ENCODE measurements at regions of chr14 and their contacts with region 1.

Region 1: DNA sequence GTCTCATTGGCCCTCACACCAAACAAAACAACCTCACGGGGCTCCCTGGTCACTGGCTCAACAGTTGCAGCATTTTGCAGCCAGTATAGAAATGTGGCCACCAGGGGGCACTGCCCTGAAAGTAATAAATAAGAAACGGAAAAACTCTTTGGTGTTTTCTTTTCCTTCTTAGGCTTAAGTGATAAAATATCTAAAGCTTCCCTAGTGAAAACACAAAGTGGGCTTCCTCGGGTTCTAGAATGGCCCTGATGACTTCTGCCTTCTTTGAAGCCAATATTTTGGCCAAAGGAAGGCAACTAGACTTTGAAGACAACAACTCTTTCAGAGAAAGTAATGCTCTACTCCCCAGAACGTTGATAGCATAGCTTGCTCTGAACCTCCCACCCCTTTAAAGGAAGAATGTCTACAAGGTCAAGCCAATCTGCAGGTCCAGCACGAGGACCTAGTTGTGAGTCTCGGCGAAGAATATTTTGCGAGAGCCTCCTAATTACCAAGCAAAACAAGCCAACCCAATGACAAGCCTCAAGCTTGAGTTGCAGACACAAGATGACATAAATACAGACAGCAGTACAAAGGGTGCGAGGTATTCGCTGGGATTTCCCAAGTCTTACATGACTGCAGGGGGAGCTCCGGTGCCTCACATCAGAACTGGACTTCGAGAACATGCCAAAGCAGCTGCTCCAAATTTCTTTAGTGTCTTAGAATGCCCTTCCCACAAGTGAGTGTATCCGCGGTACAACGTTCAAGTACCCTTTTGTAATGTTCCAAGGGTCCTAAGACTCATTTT is 2.6 kb downstream of the ITPK1 start:
- DNase-seq: peak; percentile 82
- H3K4me3 Mint-ChIP-seq: peak overlapping the region; percentile 86
- H3K27ac Mint-ChIP-seq: peak overlapping the region; percentile 67
- H3K4me1 Mint-ChIP-seq: peaks cover 9% of the 10 kb centered on the region
- H3K27me3 Mint-ChIP-seq: no peaks in the 10 kb centered on the region
- CTCF ChIP-seq: peak; percentile 73

Region 2: DNA sequence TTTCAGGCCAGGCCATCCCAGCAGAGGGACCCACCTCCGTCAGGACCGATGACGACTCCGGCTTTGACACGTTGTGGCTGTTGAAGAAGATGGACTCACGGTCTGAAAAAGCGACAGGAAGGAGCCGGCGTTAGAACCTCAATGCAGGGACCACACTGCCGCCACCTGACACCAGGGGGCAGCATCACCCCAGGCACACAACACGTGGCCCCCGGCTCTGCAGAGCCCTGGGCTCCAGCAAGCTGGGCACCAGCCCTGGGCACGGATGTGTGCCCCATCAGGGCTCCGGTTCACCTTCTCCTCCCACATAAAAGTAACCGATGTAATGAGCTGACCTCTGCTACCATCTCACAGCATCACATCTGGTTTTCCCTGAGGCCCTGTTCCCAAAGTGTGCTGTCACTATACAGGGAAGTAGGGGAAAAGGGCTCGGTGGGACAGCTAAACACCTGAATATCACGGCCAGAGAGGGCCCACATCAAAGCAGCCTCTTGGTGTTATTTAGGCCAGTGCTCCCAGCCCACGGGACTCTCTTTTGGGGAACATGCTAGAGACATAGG is 161.1 kb before region 1 on chr14:
- CTCF ChIA-PET with region 1: interaction called, 10 read pairs
- intact Hi-C with region 1: no loop called
- DNase-seq: peak; percentile 87
- H3K4me3 Mint-ChIP-seq: no peak overlapping the region
- H3K27ac Mint-ChIP-seq: no peak overlapping the region
- H3K4me1 Mint-ChIP-seq: peaks cover 8% of the 10 kb centered on the region
- H3K27me3 Mint-ChIP-seq: no peaks in the 10 kb centered on the region
- CTCF ChIP-seq: peak; percentile 89

Region 3: DNA sequence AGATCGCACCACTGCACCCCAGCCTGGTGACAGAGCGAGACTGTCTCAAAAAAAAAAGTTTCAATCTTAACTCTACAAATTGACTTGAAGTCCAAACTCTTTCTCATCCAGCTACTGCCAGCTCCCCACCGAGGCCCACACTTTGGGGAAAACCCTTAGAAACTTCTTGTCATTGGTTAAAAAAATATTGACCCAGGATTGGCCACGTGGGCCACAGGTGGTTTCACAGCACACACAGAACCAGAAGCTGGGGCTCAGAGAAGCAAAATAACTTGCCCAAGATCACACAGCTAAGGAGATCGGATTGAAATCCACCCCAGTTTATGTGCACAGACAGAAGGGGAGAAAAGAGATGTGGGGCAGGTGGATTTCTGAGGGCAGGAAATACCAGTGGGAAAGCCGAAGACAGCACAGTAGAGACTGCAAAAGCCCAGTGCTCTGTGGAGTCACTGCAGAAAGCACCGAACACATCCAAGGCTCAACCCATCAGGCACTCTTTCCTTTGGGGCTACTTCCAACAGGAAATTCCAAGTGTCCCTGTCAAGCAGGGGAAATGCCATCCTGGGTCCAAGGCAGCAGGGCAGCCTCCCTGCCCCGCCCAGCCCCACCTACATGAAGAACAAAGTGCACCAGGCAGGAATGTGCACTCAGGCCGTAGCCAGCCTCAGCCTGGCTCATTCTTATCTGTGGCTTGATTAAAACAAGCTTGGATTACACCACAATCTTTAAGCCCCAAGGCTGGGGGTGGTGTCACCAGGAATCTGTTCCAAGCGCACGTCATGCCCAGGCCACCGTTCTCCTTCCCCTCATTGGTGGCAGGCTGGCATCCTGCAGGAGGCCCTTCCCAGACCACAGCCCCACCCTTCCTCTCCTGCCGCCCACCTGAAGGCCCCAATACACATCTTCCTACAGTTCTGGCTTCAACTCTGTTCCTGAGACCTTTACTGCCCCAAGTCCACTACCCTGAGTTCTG is 69.8 kb before region 1 on chr14:
- CTCF ChIA-PET with region 1: interaction called, 17 read pairs
- intact Hi-C with region 1: loop called (anchors 2 kb)
- DNase-seq: peak; percentile 96
- H3K4me3 Mint-ChIP-seq: peak overlapping the region; percentile 50
- H3K27ac Mint-ChIP-seq: peak overlapping the region; percentile 88
- H3K4me1 Mint-ChIP-seq: peaks cover 87% of the 10 kb centered on the region
- H3K27me3 Mint-ChIP-seq: no peaks in the 10 kb centered on the region
- CTCF ChIP-seq: no peak

Region 4: GRCh38 chr14:93137864-93138263 is 24.8 kb after region 1 on chr14:
- CTCF ChIA-PET with region 1: interaction called, 23 read pairs
- intact Hi-C with region 1: loop called (anchors 2 kb)
- DNase-seq: peak; percentile 71
- H3K4me3 Mint-ChIP-seq: no peak overlapping the region
- H3K27ac Mint-ChIP-seq: no peak overlapping the region
- H3K4me1 Mint-ChIP-seq: peaks cover 17% of the 10 kb centered on the region
- H3K27me3 Mint-ChIP-seq: no peaks in the 10 kb centered on the region
- CTCF ChIP-seq: no peak

Region 5: GRCh38 chr14:93206793-93207467 is 93.8 kb after region 1 on chr14 and contains the starts of genes GON7 and UBR7:
- CTCF ChIA-PET with region 1: interaction called, 11 read pairs
- intact Hi-C with region 1: loop called (anchors 5 kb)
- DNase-seq: peak; percentile 97
- H3K4me3 Mint-ChIP-seq: peak within 1 kb of the TSS; percentile 95
- H3K27ac Mint-ChIP-seq: peak within 1 kb of the TSS; percentile 90
- H3K4me1 Mint-ChIP-seq: peaks cover 8% of the 10 kb centered on the region
- H3K27me3 Mint-ChIP-seq: no peaks in the 10 kb centered on the region
- CTCF ChIP-seq: no peak
- total RNA-seq, gene GON7: 13.3 and 13.5 TPM in 2 replicates
- total RNA-seq, gene UBR7: 16.3 and 20.3 TPM in 2 replicates

Measured in Calu3 (cell line).